Activated naive CD4-positive, alpha-beta T cell treated with anti-CD3 and anti-CD28 coated beads for 36 hours (primary cell): ENCODE measurements at regions of chr1 and their contacts with region 1.

Region 1: GRCh38 chr1:42146626-42147320 is 6.4 kb upstream of the GUCA2B start:
- DNase-seq: peak; percentile 87
- H3K4me3 Mint-ChIP-seq: no peak overlapping the region
- H3K27ac Mint-ChIP-seq: no peak overlapping the region
- H3K4me1 Mint-ChIP-seq: peaks cover 7% of the 10 kb centered on the region
- H3K27me3 Mint-ChIP-seq: peaks cover 13% of the 10 kb centered on the region

Region 2: GRCh38 chr1:41751804-41752513 is 394.8 kb before region 1 on chr1:
- CTCF ChIA-PET with region 1: no interaction called
- intact Hi-C with region 1: no loop called
- DNase-seq: no peak
- H3K4me3 Mint-ChIP-seq: no peak overlapping the region
- H3K27ac Mint-ChIP-seq: peak overlapping the region; percentile 98
- H3K4me1 Mint-ChIP-seq: peaks cover 75% of the 10 kb centered on the region
- H3K27me3 Mint-ChIP-seq: no peaks in the 10 kb centered on the region

Region 3: DNA sequence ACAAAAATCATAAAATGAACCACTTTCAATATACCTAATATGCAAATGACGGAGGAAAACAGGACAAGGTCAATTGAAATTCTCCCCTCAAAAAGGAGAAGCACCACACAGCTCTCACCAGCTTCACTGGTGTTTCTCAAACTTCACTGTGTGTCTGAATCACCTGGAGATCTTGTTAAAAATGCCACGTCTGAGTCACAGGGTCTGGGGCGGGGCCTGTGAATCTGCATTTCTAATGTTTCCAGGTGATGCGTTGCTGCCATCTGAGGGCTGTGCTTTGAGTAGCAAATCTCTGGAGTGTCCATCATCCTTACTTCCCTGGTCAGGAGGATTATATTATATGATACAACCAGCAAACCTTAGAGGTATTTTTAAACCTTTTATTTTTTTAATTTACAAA is 584.2 kb after region 1 on chr1:
- CTCF ChIA-PET with region 1: interaction called, 5 read pairs
- intact Hi-C with region 1: loop called (anchors 2 kb)
- DNase-seq: peak; percentile 87
- H3K4me3 Mint-ChIP-seq: no peak overlapping the region
- H3K27ac Mint-ChIP-seq: no peak overlapping the region
- H3K4me1 Mint-ChIP-seq: peaks cover 3% of the 10 kb centered on the region
- H3K27me3 Mint-ChIP-seq: no peaks in the 10 kb centered on the region